Endothelial cell of umbilical vein (primary cell): ENCODE measurements at regions of chr1 and their contacts with region 1.

Region 1: GRCh38 chr1:235971571-235972310 is 93.1 kb downstream of the NID1 start:
- DNase-seq: peak; percentile 94
- H3K4me3 ChIP-seq: no peak overlapping the region
- H3K27ac ChIP-seq: peak overlapping the region; percentile 64
- H3K4me1 ChIP-seq: peaks cover 22% of the 10 kb centered on the region
- H3K27me3 ChIP-seq: peaks cover 0 to 1% of the 10 kb centered on the region in 2 experiments
- CTCF ChIP-seq: peak; percentile 85 to 89
- POLR2A ChIP-seq: no peak

Region 2: GRCh38 chr1:235504496-235505222 is 467.1 kb before region 1 on chr1:
- CTCF ChIA-PET with region 1: interaction called, 15 read pairs
- POLR2A ChIA-PET with region 1: interaction called, 3 read pairs
- dilution Hi-C with region 1: no loop called
- intact Hi-C with region 1: loop called (anchors 2 kb)
- DNase-seq: peak; percentile 100
- H3K4me3 ChIP-seq: peak overlapping the region; percentile 14 to 80 (median 41)
- H3K27ac ChIP-seq: peak overlapping the region; percentile 71
- H3K4me1 ChIP-seq: peaks cover 9% of the 10 kb centered on the region
- H3K27me3 ChIP-seq: no peaks in the 10 kb centered on the region
- CTCF ChIP-seq: peak; percentile 87 to 92
- POLR2A ChIP-seq: peak; percentile 53

Region 3: GRCh38 chr1:235749755-235750300 is 221.9 kb before region 1 on chr1:
- CTCF ChIA-PET with region 1: interaction called, 14 read pairs
- POLR2A ChIA-PET with region 1: no interaction called
- dilution Hi-C with region 1: no loop called
- intact Hi-C with region 1: no loop called
- DNase-seq: peak; percentile 39
- H3K4me3 ChIP-seq: no peak overlapping the region
- H3K27ac ChIP-seq: no peak overlapping the region
- H3K4me1 ChIP-seq: no peaks in the 10 kb centered on the region
- H3K27me3 ChIP-seq: no peaks in the 10 kb centered on the region
- CTCF ChIP-seq: no peak
- POLR2A ChIP-seq: no peak

Region 4: GRCh38 chr1:235866913-235867845 is 104.6 kb before region 1 on chr1:
- CTCF ChIA-PET with region 1: interaction called, 124 read pairs
- POLR2A ChIA-PET with region 1: interaction called, 7 read pairs
- dilution Hi-C with region 1: no loop called
- intact Hi-C with region 1: loop called (anchors 1 kb)
- DNase-seq: peak; percentile 92
- H3K4me3 ChIP-seq: peak overlapping the region; percentile 60 to 97 (median 61)
- H3K27ac ChIP-seq: peak overlapping the region; percentile 1
- H3K4me1 ChIP-seq: peaks cover 13% of the 10 kb centered on the region
- H3K27me3 ChIP-seq: peaks cover 0 to 2% of the 10 kb centered on the region in 2 experiments
- CTCF ChIP-seq: no peak
- POLR2A ChIP-seq: peak; percentile 85

Region 5: GRCh38 chr1:235910357-235911299 is 61.1 kb before region 1 on chr1:
- CTCF ChIA-PET with region 1: interaction called, 20 read pairs
- POLR2A ChIA-PET with region 1: no interaction called
- dilution Hi-C with region 1: no loop called
- intact Hi-C with region 1: no loop called
- DNase-seq: peak; percentile 82
- H3K4me3 ChIP-seq: no peak overlapping the region
- H3K27ac ChIP-seq: peak overlapping the region; percentile 65
- H3K4me1 ChIP-seq: peaks cover 34% of the 10 kb centered on the region
- H3K27me3 ChIP-seq: no peaks in the 10 kb centered on the region
- CTCF ChIP-seq: no peak
- POLR2A ChIP-seq: no peak

Region 6: DNA sequence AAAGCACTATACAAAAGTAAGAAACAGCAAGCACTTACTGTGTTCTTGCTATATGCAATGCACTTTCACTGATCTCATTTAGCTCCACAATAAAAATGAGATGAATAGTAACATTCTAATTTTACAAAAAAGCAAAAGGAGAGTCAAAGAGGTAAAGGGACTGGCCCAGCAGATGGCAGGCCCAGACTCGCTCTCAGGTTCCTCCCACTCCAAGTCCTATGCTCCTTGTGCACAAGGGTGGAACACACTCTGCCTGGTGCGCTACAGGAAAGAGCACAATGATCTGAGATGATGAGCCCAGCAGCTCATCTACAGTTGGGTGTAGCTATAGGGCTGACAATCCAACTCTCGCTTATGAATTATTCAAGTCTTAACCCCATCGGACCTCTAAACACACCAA is 10.9 kb before region 1 on chr1:
- CTCF ChIA-PET with region 1: interaction called, 34 read pairs
- POLR2A ChIA-PET with region 1: no interaction called
- dilution Hi-C with region 1: no loop called
- intact Hi-C with region 1: no loop called
- DNase-seq: no peak
- H3K4me3 ChIP-seq: no peak overlapping the region
- H3K27ac ChIP-seq: no peak overlapping the region
- H3K4me1 ChIP-seq: no peaks in the 10 kb centered on the region
- H3K27me3 ChIP-seq: peaks cover 0 to 1% of the 10 kb centered on the region in 2 experiments
- CTCF ChIP-seq: no peak
- POLR2A ChIP-seq: no peak

Region 7: DNA sequence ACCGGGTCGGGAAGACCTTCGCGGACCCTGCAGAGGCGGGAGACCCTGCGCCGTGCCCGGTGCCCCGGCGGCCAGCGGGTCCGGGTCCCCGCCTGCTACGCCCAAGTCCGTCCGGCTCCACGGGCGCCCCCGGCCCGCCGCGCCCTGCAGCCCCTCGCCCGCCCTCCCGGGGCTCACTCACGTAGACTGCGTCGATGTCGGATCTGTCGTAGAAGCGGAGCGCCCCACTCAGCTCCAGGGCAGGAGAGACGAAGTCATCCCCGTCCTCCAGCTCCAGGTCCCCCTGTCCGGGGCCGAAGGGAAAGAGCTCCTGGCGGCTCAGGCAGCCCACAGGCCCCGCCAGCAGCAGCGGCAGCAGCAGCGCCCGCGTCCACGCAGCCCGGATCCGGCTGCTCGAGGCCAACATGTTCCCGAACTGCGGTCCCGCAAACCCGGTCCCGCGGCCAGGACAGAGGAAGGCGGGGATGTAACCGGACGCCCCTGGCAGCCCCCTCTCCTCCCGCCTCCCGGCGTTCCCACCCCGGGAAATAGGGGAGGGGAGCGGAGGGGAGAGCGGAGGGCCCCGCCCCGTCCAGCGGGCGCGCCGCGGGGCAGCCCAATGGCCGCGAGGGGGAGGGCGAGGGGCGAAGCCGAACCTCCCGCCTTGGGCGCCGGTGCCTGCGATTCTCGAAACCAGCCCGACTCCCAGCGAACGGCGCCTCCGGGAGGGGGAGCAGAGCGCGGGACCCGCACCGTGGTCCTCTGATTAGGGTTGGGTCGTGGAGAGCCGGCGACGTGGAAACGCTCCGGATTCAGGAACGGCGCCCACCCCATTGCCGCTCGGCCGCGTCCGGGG is 93.2 kb after region 1 on chr1 and contains the start of gene NID1:
- CTCF ChIA-PET with region 1: interaction called, 24 read pairs
- POLR2A ChIA-PET with region 1: no interaction called
- dilution Hi-C with region 1: no loop called
- intact Hi-C with region 1: loop called (anchors 1 kb)
- DNase-seq: peak; percentile 75
- H3K4me3 ChIP-seq: peak within 1 kb of the TSS; percentile 75 to 89 (median 89)
- H3K27ac ChIP-seq: peak within 1 kb of the TSS; percentile 55
- H3K4me1 ChIP-seq: peaks cover 8% of the 10 kb centered on the region
- H3K27me3 ChIP-seq: no peaks in the 10 kb centered on the region
- CTCF ChIP-seq: peak in 1 of 2 donors; percentile 52
- POLR2A ChIP-seq: peak; percentile 27
- total RNA-seq, gene NID1: 87.0 and 102 TPM in 2 replicates